Endothelial cell of umbilical vein (primary cell): ENCODE measurements at regions of chr6 and their contacts with region 1.

Region 1: GRCh38 chr6:149863697-149864577 is at the start of gene LRP11:
- DNase-seq: peak; percentile 86
- H3K4me3 ChIP-seq: peak within 1 kb of the TSS; percentile 61 to 91 (median 84)
- H3K27ac ChIP-seq: peak within 1 kb of the TSS; percentile 72
- H3K4me1 ChIP-seq: peaks cover 34% of the 10 kb centered on the region
- H3K27me3 ChIP-seq: no peaks in the 10 kb centered on the region
- CTCF ChIP-seq: no peak
- POLR2A ChIP-seq: peak; percentile 36
- total RNA-seq, gene LRP11: 29.9 and 59.1 TPM in 2 replicates

Region 2: DNA sequence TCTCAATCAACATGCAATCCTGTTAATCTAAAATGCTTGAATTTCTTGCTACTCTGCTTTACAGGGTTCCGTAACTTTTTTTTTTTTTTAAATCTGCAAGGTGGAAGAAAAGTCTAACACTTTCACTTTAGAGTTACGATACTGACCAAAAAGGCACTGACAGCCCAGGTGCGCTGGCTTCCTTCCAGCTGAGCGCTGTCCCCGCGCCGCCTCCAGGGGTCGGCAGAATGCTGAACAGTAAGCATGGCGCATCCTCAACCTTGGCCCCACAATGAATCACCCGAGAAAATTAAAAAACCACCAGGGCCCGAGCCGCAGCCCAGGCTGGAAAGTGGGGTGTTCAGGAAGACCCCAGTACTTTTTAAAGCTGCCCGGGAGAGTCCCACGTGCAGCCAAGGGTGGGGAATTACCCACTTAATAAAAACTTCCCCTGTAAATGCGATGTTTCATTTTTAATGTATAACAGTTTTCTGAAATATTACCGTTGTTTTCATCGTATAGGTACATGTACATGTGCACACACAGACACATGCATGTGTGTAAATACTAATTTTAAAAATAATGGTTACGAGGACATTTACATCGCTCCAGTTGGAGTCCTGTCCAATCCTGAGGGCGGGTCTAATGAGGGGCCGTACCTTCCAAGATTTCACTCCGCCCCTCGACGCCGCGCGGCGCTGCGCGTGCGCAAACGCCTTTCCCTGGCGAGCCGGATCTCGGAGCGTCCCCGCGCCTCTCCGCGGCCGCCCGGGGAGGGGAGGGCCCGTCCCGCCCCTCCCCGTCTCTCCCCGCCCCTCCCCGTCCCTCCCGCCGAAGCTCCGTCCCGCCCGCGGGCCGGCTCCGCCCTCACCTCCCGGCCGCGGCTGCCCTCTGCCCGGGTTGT is 298.2 kb before region 1 on chr6 and contains the start of gene GINM1:
- CTCF ChIA-PET with region 1: no interaction called
- POLR2A ChIA-PET with region 1: no interaction called
- dilution Hi-C with region 1: no loop called
- intact Hi-C with region 1: loop called (anchors 2 kb)
- DNase-seq: peak; percentile 97
- H3K4me3 ChIP-seq: peak within 1 kb of the TSS; percentile 75 to 93 (median 85)
- H3K27ac ChIP-seq: peak within 1 kb of the TSS; percentile 82
- H3K4me1 ChIP-seq: peaks cover 16% of the 10 kb centered on the region
- H3K27me3 ChIP-seq: no peaks in the 10 kb centered on the region
- CTCF ChIP-seq: peak; percentile 52 to 71
- POLR2A ChIP-seq: no peak
- total RNA-seq, gene GINM1: 38.0 and 38.2 TPM in 2 replicates

Region 3: DNA sequence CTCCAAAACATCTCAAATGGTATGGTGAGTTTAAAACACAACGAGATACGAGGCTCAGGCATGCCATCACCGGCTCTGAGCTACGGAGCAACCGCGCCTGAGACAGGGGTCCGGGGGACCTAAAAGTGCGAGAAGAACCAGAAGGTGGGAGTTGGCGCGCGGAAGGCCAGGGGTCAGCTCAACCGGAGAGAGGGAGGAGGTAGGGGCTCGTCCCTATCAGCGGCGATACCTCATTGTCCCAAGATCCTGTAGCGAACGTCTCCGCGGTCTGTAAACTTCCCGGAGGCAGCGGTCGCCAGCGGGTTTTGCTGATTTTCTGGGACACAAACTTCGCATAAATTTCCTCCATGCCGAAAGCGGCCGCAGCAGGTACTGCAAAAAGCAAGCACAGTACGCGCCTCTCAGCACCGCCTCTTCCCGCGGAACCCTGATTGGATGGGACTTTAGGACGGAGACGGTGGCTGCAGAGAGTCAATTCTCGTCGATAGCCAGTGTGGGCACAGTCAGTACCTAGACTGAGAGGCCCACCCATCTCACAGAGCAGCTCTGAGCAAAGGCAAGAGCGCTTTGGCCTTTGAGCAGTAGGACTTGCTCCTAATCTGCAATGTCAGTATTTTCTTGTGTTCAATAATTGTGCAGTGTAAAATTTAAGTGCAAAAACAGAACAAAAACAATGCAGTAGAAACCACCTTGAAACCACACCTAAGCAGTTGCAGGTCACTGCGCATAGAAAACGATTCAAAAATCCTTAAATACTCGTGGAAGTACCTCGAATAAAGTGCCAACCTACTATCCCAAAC is 117.6 kb before region 1 on chr6 and contains the start of gene NUP43:
- CTCF ChIA-PET with region 1: no interaction called
- POLR2A ChIA-PET with region 1: no interaction called
- dilution Hi-C with region 1: no loop called
- intact Hi-C with region 1: loop called (anchors 1 kb)
- DNase-seq: peak; percentile 92
- H3K4me3 ChIP-seq: peak within 1 kb of the TSS; percentile 83 to 97 (median 96)
- H3K27ac ChIP-seq: peak within 1 kb of the TSS; percentile 47
- H3K4me1 ChIP-seq: peaks cover 12% of the 10 kb centered on the region
- H3K27me3 ChIP-seq: no peaks in the 10 kb centered on the region
- CTCF ChIP-seq: peak; percentile 34 to 53
- POLR2A ChIP-seq: peak; percentile 82
- total RNA-seq, gene NUP43: 49.0 and 56.8 TPM in 2 replicates

Region 4: GRCh38 chr6:149840345-149841075 is 23.4 kb before region 1 on chr6:
- CTCF ChIA-PET with region 1: interaction called, 21 read pairs
- POLR2A ChIA-PET with region 1: interaction called, 3 read pairs
- dilution Hi-C with region 1: no loop called
- intact Hi-C with region 1: loop called (anchors 1 kb)
- DNase-seq: peak; percentile 66
- H3K4me3 ChIP-seq: no peak overlapping the region
- H3K27ac ChIP-seq: no peak overlapping the region
- H3K4me1 ChIP-seq: peaks cover 3% of the 10 kb centered on the region
- H3K27me3 ChIP-seq: no peaks in the 10 kb centered on the region
- CTCF ChIP-seq: peak; percentile 64 to 65
- POLR2A ChIP-seq: no peak

Region 5: DNA sequence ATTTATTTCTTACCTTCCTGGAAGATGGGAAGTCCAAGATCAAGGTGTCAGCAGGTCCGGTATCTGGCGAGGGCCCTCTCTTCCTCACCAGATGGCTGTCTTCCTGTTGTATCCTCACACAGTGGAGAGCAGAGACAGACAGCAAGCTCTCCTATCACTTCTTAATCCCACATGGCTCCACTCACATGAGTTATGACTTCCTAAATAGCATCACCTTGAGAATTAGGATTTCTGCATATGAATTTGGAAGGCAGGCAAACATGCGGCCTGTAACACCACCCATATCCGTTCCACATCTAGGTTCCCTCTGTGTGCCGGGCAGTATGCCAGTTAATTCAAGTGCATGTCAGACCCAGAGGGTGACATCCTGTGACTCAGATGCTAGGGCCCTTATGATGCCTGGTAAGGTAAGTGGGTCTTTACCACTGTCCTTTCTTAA is 31.9 kb after region 1 on chr6:
- CTCF ChIA-PET with region 1: interaction called, 3 read pairs
- POLR2A ChIA-PET with region 1: interaction called, 3 read pairs
- dilution Hi-C with region 1: no loop called
- intact Hi-C with region 1: loop called (anchors 2 kb)
- DNase-seq: peak; percentile 58
- H3K4me3 ChIP-seq: no peak overlapping the region
- H3K27ac ChIP-seq: no peak overlapping the region
- H3K4me1 ChIP-seq: peaks cover 17% of the 10 kb centered on the region
- H3K27me3 ChIP-seq: peaks cover 0 to 3% of the 10 kb centered on the region in 2 experiments
- CTCF ChIP-seq: no peak
- POLR2A ChIP-seq: no peak

Region 6: GRCh38 chr6:149965194-149966020 is 101.5 kb after region 1 on chr6:
- CTCF ChIA-PET with region 1: no interaction called
- POLR2A ChIA-PET with region 1: no interaction called
- dilution Hi-C with region 1: no loop called
- intact Hi-C with region 1: no loop called
- DNase-seq: no peak
- H3K4me3 ChIP-seq: peak overlapping the region in 1 of 3 experiments; percentile 44
- H3K27ac ChIP-seq: no peak overlapping the region
- H3K4me1 ChIP-seq: peaks cover 18% of the 10 kb centered on the region
- H3K27me3 ChIP-seq: peaks cover 12 to 37% of the 10 kb centered on the region in 2 experiments
- CTCF ChIP-seq: no peak
- POLR2A ChIP-seq: no peak

Region 7: DNA sequence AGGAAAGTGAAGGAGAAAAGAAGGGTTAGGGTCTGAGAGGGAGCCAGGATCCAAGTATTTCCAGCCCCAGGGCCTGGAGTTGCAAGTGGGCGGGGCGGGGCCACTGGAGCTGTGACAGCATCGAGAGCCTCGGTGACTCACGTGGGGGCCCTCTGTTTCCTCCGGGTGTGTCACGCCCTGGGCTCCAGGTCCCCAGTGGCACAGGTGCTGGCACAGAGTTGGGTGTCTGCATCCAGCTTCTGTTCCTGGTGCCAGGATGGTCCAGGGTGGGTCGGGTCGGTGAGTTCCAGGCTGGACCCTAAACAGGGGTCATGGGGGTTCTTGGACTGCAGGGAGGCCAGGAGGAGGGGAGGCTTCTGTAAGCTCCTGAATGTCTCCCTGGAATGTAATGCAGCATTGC is 144.7 kb after region 1 on chr6:
- CTCF ChIA-PET with region 1: no interaction called
- POLR2A ChIA-PET with region 1: no interaction called
- dilution Hi-C with region 1: no loop called
- intact Hi-C with region 1: no loop called
- DNase-seq: no peak
- H3K4me3 ChIP-seq: no peak overlapping the region
- H3K27ac ChIP-seq: no peak overlapping the region
- H3K4me1 ChIP-seq: peaks cover 2% of the 10 kb centered on the region
- H3K27me3 ChIP-seq: peaks cover 21 to 40% of the 10 kb centered on the region in 2 experiments
- CTCF ChIP-seq: no peak
- POLR2A ChIP-seq: no peak